AG04450 (cell line): ENCODE measurements at regions of chr12 and their contacts with region 1.

Region 1: GRCh38 chr12:1795785-1796514 is 24.4 kb upstream of the LRTM2 start:
- DNase-seq: peak; percentile 71
- H3K4me3 ChIP-seq: peak overlapping the region; percentile 46
- H3K27ac ChIP-seq: no peak overlapping the region
- H3K27me3 ChIP-seq: peaks cover 3% of the 10 kb centered on the region
- CTCF ChIP-seq: peak; percentile 73

Region 2: DNA sequence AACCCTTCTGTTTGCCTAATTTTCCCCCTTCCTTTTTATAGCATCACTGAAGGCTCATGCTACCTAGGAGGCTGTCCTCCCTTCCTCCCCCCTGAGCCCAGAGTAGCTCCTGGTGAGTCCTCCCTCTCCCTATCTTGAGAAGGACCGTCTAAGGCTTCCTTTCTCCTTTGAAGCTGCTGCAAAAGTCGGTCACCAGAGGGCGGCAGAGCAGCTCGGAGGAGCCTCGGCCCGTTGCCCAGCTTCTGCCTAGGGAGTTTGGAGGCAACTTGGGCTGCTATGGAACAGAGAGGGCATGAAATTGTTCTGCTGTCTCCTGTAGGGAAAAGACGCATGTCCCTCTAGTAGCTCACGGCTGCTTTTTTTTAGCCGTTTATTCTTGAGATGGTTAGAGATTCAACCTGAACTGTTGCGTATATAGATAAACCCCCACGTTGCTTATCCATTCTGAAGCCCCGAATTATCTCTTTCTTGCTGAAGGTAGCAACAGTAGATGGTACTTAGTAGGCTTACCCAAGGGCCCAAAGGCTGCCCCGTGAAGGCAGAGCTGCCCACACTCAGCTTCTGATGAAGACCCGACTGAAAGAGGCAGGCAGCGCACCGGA is 161.3 kb before region 1 on chr12:
- CTCF ChIA-PET with region 1: interaction called, 82 read pairs
- POLR2A ChIA-PET with region 1: no interaction called
- DNase-seq: peak; percentile 49
- H3K4me3 ChIP-seq: no peak overlapping the region
- H3K27ac ChIP-seq: no peak overlapping the region
- H3K27me3 ChIP-seq: no peaks in the 10 kb centered on the region
- CTCF ChIP-seq: peak; percentile 92

Region 3: GRCh38 chr12:1644534-1645438 is 151.2 kb before region 1 on chr12:
- CTCF ChIA-PET with region 1: interaction called, 440 read pairs
- POLR2A ChIA-PET with region 1: no interaction called
- DNase-seq: peak; percentile 55
- H3K4me3 ChIP-seq: 0 out of 2 replicates have a peak overlapping the region, but pooled peaks have one; percentile 17
- H3K27ac ChIP-seq: no peak overlapping the region
- H3K27me3 ChIP-seq: no peaks in the 10 kb centered on the region
- CTCF ChIP-seq: no peak

Region 4: GRCh38 chr12:1670815-1671268 is 125.1 kb before region 1 on chr12:
- CTCF ChIA-PET with region 1: interaction called, 13 read pairs
- POLR2A ChIA-PET with region 1: no interaction called
- DNase-seq: no peak
- H3K4me3 ChIP-seq: no peak overlapping the region
- H3K27ac ChIP-seq: no peak overlapping the region
- H3K27me3 ChIP-seq: no peaks in the 10 kb centered on the region
- CTCF ChIP-seq: no peak

Region 5: DNA sequence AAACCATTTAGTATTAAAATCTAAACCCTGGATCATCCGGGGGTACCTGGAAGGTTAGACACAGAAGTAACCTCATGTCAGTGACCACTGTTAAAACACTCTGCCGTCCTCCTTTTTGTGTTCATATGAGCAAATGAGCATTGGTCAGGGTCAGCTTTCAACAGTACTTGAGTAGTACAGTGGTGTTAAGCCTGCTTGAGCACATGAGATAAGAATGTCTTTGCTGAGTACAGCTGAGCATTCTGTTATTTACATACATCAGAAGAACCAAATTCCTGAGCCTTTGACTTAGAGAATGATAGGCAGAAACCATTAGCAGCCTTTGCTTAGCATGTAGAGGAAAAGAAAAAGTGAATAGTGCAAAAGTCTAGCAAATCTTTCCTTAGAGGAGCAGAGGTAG is 14.2 kb before region 1 on chr12:
- CTCF ChIA-PET with region 1: interaction called, 20 read pairs
- POLR2A ChIA-PET with region 1: no interaction called
- DNase-seq: peak; percentile 62
- H3K4me3 ChIP-seq: no peak overlapping the region
- H3K27ac ChIP-seq: no peak overlapping the region
- H3K27me3 ChIP-seq: no peaks in the 10 kb centered on the region
- CTCF ChIP-seq: no peak

Region 6: DNA sequence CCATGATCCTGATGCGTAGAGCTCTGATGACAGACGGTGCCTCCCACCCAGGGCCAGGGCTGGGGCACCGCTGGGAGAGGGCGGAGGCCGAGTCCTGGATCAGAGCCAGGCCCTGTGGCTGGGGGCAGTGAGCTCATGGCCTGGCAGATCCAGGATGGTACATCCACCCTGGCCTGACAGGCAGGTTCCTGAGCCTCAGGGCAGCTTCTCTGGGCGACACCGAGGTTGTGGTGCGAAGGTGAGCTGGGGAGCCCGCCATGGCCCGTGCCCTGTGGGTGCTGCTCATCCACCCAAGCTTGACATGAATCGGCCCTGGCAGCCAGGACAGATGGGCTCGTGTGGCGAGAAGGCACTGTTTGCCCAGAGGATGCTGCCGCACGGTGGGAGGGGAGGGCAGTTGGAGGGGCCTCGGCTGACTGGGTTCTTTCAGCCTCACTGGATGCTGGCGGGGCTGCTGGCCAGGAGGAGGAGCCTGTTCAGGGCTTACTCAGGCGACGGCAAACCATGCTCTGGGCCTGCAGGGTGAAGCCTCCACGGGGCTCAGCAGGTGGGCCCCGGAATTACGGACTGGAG is 41.0 kb after region 1 on chr12:
- CTCF ChIA-PET with region 1: no interaction called
- POLR2A ChIA-PET with region 1: no interaction called
- DNase-seq: no peak
- H3K4me3 ChIP-seq: no peak overlapping the region
- H3K27ac ChIP-seq: no peak overlapping the region
- H3K27me3 ChIP-seq: peaks cover 40% of the 10 kb centered on the region
- CTCF ChIP-seq: no peak

Region 7: GRCh38 chr12:2129076-2129475 is 333.1 kb after region 1 on chr12:
- CTCF ChIA-PET with region 1: interaction called, 10 read pairs
- POLR2A ChIA-PET with region 1: no interaction called
- DNase-seq: peak; percentile 15
- H3K4me3 ChIP-seq: no peak overlapping the region
- H3K27ac ChIP-seq: peak overlapping the region; percentile 52
- H3K27me3 ChIP-seq: no peaks in the 10 kb centered on the region
- CTCF ChIP-seq: no peak

Region 8: GRCh38 chr12:2198005-2198501 is 402.1 kb after region 1 on chr12:
- CTCF ChIA-PET with region 1: no interaction called
- POLR2A ChIA-PET with region 1: no interaction called
- DNase-seq: no peak
- H3K4me3 ChIP-seq: no peak overlapping the region
- H3K27ac ChIP-seq: no peak overlapping the region
- H3K27me3 ChIP-seq: no peaks in the 10 kb centered on the region
- CTCF ChIP-seq: no peak